Activated CD4-positive, alpha-beta T cell treated with anti-CD3 and anti-CD28 coated beads, Interleukin-2, amount 10 ng/mL, durations not matched to agents 7 days and 5 days (primary cell): ENCODE measurements at regions of chr14 and their contacts with region 1.

Region 1: GRCh38 chr14:98187281-98187680 is 1084.7 kb downstream of the BCL11B start:
- DNase-seq: no peak
- H3K4me3 Mint-ChIP-seq: peak overlapping the region; percentile 9
- H3K27ac Mint-ChIP-seq: peak overlapping the region; percentile 99
- H3K4me1 Mint-ChIP-seq: peaks cover 99% of the 10 kb centered on the region
- H3K27me3 Mint-ChIP-seq: no peaks in the 10 kb centered on the region

Region 2: GRCh38 chr14:98175436-98175835 is 11.8 kb before region 1 on chr14:
- CTCF ChIA-PET with region 1: interaction called, 13 read pairs
- POLR2A ChIA-PET with region 1: no interaction called
- DNase-seq: peak; percentile 57
- H3K4me3 Mint-ChIP-seq: peak overlapping the region; percentile 58
- H3K27ac Mint-ChIP-seq: peak overlapping the region; percentile 93
- H3K4me1 Mint-ChIP-seq: peaks cover 98% of the 10 kb centered on the region
- H3K27me3 Mint-ChIP-seq: no peaks in the 10 kb centered on the region

Region 3: DNA sequence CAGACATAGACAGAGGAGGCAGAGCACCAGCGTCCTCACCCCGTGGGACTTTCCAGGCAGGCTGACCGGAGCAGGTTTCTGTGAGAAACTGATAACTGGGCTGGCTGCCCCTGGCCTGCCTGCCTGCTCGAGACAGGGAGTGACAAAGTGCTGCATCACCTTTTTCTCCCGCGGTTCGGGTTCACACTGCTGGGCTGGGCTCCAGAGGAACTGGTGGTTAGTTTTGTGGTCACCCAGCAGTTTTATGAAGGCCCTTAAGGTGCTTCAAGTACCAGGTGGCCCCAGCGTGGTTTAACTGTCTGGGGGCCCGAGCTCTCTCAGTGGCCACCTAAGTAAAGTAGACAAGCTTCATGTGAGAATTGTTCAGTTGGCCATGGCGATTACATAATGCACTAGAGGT is 11.1 kb after region 1 on chr14:
- CTCF ChIA-PET with region 1: interaction called, 14 read pairs
- POLR2A ChIA-PET with region 1: no interaction called
- DNase-seq: peak; percentile 71
- H3K4me3 Mint-ChIP-seq: peak overlapping the region; percentile 23
- H3K27ac Mint-ChIP-seq: peak overlapping the region; percentile 81
- H3K4me1 Mint-ChIP-seq: peaks cover 88% of the 10 kb centered on the region
- H3K27me3 Mint-ChIP-seq: no peaks in the 10 kb centered on the region